Lower leg skin (tissue), 4 donors: ENCODE measurements at regions of chr3 and their contacts with region 1.

Region 1: GRCh38 chr3:55721716-55722484 is 234.8 kb upstream of the WNT5A start:
- DNase-seq: peak in 1 of 2 donors; percentile 17
- H3K4me3 ChIP-seq: no peak overlapping the region
- CTCF ChIP-seq: no peak
- POLR2A ChIP-seq: no peak

Region 2: GRCh38 chr3:54853573-54854404 is 868.1 kb before region 1 on chr3:
- intact Hi-C with region 1: loop called (anchors 10 kb)
- DNase-seq: peak; percentile 60 to 96
- H3K4me3 ChIP-seq: no peak overlapping the region
- CTCF ChIP-seq: peak in 1 of 3 donors; percentile 71
- POLR2A ChIP-seq: no peak

Region 3: DNA sequence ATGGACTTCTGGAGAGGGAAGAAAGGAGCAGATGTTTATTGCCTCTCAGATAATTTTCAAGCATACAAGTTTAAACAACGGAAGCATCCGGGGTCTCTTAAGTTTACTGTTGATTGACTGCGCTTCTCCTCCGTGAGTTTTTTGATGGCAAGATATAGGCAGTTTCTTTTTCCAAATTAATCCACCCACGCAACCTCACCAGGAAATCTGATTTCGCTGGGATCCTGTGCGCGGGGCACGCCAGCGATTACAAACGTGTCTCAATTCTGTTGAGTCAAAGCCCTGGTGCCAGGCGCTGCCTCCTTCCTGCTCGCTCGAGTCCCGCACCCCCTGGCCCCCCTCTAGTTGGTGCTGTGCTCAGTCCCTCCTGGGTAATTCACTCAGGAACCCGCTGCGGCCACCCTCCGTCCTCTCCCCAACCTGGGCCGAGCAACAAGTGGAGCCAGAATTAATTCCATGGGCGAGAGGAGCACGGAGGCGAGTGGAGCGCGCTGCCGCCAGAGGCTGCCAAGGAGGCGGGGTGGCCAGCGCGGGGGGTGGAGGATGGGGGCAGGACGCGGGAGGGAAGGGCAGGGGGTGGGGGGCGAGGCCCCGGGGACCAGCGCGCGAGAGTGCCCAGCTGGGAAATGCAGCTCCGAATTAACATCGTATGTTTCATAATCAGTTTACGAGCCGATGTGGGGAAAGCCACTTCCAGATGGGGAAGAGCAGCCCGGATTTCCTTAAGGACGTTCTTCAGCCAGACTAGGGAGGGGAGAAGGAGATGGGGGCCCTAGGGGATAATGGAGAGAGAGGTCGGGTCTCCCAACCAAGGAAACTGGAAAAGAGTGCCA is 240.8 kb before region 1 on chr3:
- intact Hi-C with region 1: loop called (anchors 5 kb)
- DNase-seq: no peak
- H3K4me3 ChIP-seq: peak overlapping the region; percentile 17
- CTCF ChIP-seq: no peak
- POLR2A ChIP-seq: no peak